Activated naive CD4-positive, alpha-beta T cell treated with anti-CD3 and anti-CD28 coated beads, Interleukin-2, amount 10 ng/mL, durations not matched to agents 7 days and 5 days (primary cell): ENCODE measurements at regions of chr1 and their contacts with region 1.

Region 1: GRCh38 chr1:155250633-155251449 is 4.4 kb downstream of the ENTREP3 start:
- DNase-seq: peak; percentile 98
- H3K4me3 Mint-ChIP-seq: peak overlapping the region; percentile 60
- H3K27ac Mint-ChIP-seq: peak overlapping the region; percentile 78
- H3K4me1 Mint-ChIP-seq: peaks cover 42% of the 10 kb centered on the region
- H3K27me3 Mint-ChIP-seq: no peaks in the 10 kb centered on the region

Region 2: GRCh38 chr1:155261852-155262673 is 11.2 kb after region 1 on chr1 and contains the start of gene SCAMP3:
- CTCF ChIA-PET with region 1: interaction called, 57 read pairs
- DNase-seq: peak; percentile 93
- H3K4me3 Mint-ChIP-seq: peak within 1 kb of the TSS; percentile 96
- H3K27ac Mint-ChIP-seq: peak within 1 kb of the TSS; percentile 93
- H3K4me1 Mint-ChIP-seq: peaks cover 49% of the 10 kb centered on the region
- H3K27me3 Mint-ChIP-seq: no peaks in the 10 kb centered on the region

Region 3: DNA sequence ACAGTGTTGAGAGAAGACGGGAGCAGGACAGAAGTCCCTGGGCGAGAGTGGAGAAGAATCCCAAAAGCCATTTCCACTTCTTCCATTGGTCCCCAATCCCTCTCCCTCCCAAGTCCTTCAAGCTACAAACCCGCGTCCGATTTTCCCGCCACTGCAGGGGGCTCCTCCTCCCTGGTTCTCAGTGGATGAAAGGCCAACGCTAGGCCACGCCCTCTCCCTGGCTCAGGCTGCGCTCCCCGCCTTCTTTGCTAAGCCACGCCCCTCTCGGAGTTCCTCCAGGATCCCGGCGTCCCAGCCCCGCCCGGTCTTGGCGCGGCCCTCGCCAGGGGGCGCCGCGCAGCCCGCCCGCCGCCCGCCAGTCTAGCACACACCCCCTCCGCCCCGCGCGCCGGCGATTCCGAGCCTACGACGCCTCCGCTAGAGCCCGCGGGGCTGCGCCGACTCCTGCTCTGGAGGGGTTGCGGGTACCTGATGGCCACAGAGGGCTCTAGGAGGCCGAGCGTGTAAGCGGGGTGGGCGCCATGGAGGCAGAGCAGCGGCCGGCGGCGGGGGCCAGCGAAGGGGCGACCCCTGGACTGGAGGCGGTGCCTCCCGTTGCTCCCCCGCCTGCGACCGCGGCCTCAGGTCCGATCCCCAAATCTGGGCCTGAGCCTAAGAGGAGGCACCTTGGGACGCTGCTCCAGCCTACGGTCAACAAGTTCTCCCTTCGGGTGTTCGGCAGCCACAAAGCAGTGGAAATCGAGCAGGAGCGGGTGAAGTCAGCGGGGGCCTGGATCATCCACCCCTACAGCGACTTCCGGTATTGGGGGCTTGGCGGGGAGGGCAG is 26.4 kb after region 1 on chr1 and contains the start of gene HCN3:
- CTCF ChIA-PET with region 1: interaction called, 34 read pairs
- DNase-seq: peak; percentile 96
- H3K4me3 Mint-ChIP-seq: peak within 1 kb of the TSS; percentile 68
- H3K27ac Mint-ChIP-seq: peak within 1 kb of the TSS; percentile 26
- H3K4me1 Mint-ChIP-seq: peaks cover 41% of the 10 kb centered on the region
- H3K27me3 Mint-ChIP-seq: peaks cover 26% of the 10 kb centered on the region

Region 4: GRCh38 chr1:155316922-155317321 is 66.1 kb after region 1 on chr1:
- CTCF ChIA-PET with region 1: interaction called, 138 read pairs
- DNase-seq: no peak
- H3K4me3 Mint-ChIP-seq: no peak overlapping the region
- H3K27ac Mint-ChIP-seq: no peak overlapping the region
- H3K4me1 Mint-ChIP-seq: peaks cover 45% of the 10 kb centered on the region
- H3K27me3 Mint-ChIP-seq: no peaks in the 10 kb centered on the region

Region 5: DNA sequence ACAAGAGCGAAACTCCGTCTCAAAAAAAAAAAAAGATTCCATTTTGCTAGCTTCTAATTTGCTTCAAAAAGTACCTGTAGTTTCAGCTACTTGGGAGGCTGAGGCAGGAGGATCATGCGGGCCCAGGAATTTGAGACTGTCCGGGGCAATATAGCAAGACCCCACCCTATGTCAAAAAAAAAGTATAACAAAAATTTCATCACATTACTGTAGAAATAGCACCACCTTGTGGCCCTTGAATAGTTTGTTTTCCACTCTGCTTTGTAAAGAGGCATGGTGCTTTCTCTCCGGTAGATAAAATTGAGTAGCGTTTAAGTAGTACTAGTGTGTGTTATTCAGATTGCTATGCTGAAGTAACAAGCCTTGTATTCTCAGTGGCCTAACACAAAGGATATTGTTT is 340.9 kb after region 1 on chr1:
- CTCF ChIA-PET with region 1: interaction called, 32 read pairs
- DNase-seq: peak; percentile 46
- H3K4me3 Mint-ChIP-seq: no peak overlapping the region
- H3K27ac Mint-ChIP-seq: peak overlapping the region; percentile 19
- H3K4me1 Mint-ChIP-seq: no peaks in the 10 kb centered on the region
- H3K27me3 Mint-ChIP-seq: no peaks in the 10 kb centered on the region